Dorsolateral prefrontal cortex (tissue), 120 donors: ENCODE measurements at regions of chr18 and their contacts with region 1.

Region 1: GRCh38 chr18:74147779-74148542 is at the starts of genes FBXO15 and TIMM21:
- DNase-seq: peak; percentile 94 to 96 (median 96)
- H3K4me3 ChIP-seq: peak within 1 kb of the TSS; percentile 53 to 100 (median 88)
- H3K27ac ChIP-seq: peak within 1 kb of the TSS; percentile 91 to 100 (median 99)
- H3K27me3 ChIP-seq: no peaks in the 10 kb centered on the region
- CTCF ChIP-seq: peak in 19 of 56 donors; percentile 1 to 50 (median 18)
- total RNA-seq, gene FBXO15: 2.4 to 9.5 (median 5.9) TPM
- total RNA-seq, gene TIMM21: 24.5 to 64.1 (median 41.0) TPM

Region 2: DNA sequence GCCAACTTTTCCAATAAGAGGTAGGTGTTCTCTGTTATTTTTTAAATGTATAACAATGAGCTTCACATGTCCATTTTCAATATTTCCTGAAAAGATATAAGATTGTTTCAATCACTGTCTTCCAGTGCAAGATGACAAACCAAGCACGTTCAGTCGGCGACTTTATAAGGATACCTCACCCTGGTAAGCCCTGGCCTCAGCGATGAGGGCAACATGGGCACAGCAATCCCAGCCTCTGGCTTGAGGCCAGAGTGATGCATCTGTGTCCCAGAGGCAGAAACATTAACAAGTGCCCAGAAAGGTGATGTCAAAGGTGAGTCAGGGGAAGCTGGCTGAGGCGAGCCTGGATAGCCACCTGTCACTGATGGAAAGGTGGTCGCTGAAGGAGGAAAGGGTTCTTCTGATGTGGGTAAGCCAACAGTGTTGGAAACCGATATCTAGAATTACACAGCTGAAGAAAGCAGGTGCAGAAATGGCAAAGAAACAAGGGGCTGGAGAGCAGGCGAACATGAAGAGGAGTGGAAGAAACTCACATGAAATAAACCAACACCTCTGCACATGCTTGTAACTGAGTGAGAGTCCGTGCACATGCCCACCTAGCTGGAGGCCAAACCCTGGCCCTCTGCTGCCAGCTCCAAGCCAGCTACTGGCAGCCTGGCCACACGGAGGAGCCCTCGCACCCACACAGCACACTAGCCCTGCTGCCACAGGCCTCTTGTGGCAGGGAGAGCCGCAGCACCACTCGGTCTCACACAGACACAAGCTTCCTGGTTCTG is 65.8 kb before region 1 on chr18:
- intact Hi-C with region 1: loop called in 1 of 2 experiments (anchors 2 kb)
- DNase-seq: peak in 8 of 10 donors; percentile 54 to 78 (median 66)
- H3K4me3 ChIP-seq: peak overlapping the region in 15 of 59 donors; percentile 7 to 45 (median 29)
- H3K27ac ChIP-seq: peak overlapping the region in 27 of 59 donors; percentile 1 to 74 (median 47)
- H3K27me3 ChIP-seq: no peaks in the 10 kb centered on the region
- CTCF ChIP-seq: peak in 54 of 56 donors; percentile 14 to 82 (median 58)

Region 3: DNA sequence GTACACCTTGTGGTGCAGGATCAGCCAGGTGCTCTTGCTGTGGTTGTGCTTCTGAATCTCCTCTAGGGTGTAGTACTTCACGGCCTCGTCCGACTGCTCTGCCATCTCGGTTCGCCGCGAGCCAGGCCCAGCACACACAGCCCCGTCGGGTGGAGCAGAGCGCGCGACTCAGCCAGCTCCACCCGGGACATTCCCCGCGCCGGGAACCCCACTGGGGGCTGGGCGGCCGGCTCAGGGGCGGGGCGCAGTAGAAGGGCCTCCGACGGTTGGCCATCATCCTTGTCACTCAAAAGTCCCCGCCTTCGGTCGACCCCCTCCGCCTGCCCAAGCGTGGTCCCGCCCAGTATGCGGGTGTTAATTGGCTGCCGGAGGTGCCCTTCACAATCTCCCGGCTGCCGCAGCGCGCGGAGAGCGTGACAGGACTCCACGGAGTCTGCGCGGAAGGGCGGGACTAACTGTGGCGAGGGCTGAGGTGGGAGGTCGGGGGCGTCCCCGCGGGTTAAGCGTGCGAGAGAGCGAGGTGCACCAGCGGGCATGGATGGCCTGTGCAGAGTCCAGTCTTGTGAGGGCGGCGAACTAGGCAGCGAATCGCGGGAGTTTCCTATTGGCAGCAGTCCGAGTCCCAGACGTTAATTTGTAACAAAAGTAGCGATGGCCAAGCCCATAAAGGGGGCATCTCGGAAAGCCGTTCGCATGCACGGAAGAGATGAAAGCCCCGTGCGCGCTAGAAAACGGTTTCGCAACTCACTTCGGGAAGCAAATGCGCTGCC is 144.0 kb after region 1 on chr18 and contains the start of gene CYB5A:
- intact Hi-C with region 1: loop called (anchors 2 to 5 kb)
- DNase-seq: peak; percentile 98 to 100 (median 99)
- H3K4me3 ChIP-seq: peak within 1 kb of the TSS; percentile 65 to 100 (median 92)
- H3K27ac ChIP-seq: peak within 1 kb of the TSS in 55 of 59 donors; percentile 3 to 87 (median 73)
- H3K27me3 ChIP-seq: no peaks in the 10 kb centered on the region
- CTCF ChIP-seq: peak in 7 of 56 donors; percentile 2 to 38 (median 13)
- total RNA-seq, gene CYB5A: 20.0 to 49.0 (median 31.9) TPM

Region 4: GRCh38 chr18:74597662-74598349 is 449.8 kb after region 1 on chr18 and contains the start of gene ZNF407:
- intact Hi-C with region 1: loop called in 1 of 2 experiments (anchors 5 kb)
- DNase-seq: peak; percentile 73 to 91 (median 83)
- H3K4me3 ChIP-seq: peak within 1 kb of the TSS; percentile 70 to 100 (median 94)
- H3K27ac ChIP-seq: peak within 1 kb of the TSS; percentile 83 to 100 (median 99)
- H3K27me3 ChIP-seq: no peaks in the 10 kb centered on the region
- CTCF ChIP-seq: no peak
- total RNA-seq, gene ZNF407: 15.2 to 27.4 (median 21.5) TPM